AG04449 (cell line): ENCODE measurements at regions of chr6 and their contacts with region 1.

Region 1: DNA sequence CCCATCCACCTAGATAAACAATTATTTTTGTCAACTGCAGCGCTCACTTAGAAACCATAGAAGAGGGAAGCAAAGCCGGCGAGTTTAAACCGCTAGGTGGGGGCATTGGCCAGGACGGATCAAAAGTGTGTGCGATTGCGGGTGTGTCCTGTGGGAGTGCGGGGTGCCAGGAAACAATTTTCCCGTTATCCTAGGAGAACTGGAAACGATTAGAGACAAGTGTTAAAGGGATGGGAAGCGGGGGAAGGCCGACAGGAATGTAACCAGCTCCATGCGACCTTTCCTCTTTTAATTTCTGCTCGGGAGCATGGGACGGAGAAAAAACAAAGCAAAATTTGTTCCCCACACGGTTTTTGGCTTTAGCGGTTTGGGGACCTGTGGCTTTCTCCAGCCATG is 2.8 kb upstream of the HTR1B start:
- DNase-seq: no peak
- H3K4me3 ChIP-seq: peak overlapping the region; percentile 66
- CTCF ChIP-seq: peak; percentile 74

Region 2: DNA sequence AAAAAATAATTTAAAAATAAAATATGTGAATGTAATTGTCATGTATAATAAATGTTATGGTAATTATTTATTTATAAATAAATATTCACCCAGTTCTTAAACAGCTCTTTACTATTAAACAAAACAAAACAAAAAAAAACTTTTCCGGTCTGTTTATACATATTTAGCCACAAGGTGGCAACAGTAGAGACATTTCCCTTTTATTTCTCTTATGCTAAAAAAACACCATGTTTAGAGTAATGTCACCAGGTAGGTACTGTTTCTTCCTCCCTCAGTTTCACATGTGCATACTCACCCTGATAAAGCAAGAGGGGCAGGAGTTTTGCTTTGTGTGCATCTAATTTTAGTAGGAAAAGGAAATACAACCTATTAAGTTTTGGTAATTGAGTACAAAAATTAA is 783.2 kb before region 1 on chr6:
- CTCF ChIA-PET with region 1: interaction called, 27 read pairs
- POLR2A ChIA-PET with region 1: no interaction called
- DNase-seq: no peak
- H3K4me3 ChIP-seq: no peak overlapping the region
- CTCF ChIP-seq: no peak

Region 3: DNA sequence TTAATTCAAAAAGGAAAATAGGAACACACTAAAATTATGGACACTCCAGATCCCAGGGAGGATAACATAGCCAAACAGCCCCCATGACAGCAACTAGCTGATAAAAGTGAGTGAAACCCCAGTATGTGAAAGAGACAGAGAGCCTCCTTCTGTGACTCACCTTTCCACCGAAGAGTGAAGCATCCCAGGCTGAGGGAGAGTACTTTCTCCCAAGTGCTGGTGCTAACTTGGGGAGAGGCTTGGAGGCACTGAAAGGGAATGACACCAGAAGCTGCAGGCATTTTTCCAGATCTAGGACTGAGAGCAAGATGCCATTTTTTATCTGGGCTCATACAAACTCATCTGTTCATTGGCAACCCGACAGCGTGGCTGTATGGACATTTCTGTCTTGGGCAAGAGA is 342.5 kb before region 1 on chr6:
- CTCF ChIA-PET with region 1: no interaction called
- POLR2A ChIA-PET with region 1: no interaction called
- DNase-seq: no peak
- H3K4me3 ChIP-seq: no peak overlapping the region
- CTCF ChIP-seq: no peak

Region 4: GRCh38 chr6:77814119-77814518 is 348.1 kb after region 1 on chr6:
- CTCF ChIA-PET with region 1: no interaction called
- POLR2A ChIA-PET with region 1: no interaction called
- DNase-seq: no peak
- H3K4me3 ChIP-seq: no peak overlapping the region
- CTCF ChIP-seq: no peak

Region 5: GRCh38 chr6:77825204-77825603 is 359.2 kb after region 1 on chr6:
- CTCF ChIA-PET with region 1: no interaction called
- POLR2A ChIA-PET with region 1: no interaction called
- DNase-seq: no peak
- H3K4me3 ChIP-seq: no peak overlapping the region
- CTCF ChIP-seq: no peak

Region 6: DNA sequence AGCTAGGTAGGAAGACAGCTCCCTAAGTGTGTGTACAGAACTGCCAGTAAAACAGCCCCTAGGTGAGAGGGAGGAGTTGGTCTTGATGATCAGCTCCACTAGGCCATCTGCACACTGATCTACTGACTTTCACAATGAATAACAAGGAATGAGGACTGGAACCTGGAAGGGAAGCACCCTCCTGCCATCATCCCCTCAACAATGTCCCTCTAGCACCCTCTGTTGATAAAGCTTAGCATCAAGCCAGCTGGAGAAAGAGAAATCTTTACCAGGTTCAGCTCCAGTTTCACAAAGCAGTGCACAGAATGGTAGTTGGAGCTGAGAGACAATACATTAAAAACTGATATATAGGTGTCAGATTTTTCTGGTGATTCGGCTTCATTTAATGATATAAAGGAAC is 1344.1 kb after region 1 on chr6:
- CTCF ChIA-PET with region 1: interaction called, 45 read pairs
- POLR2A ChIA-PET with region 1: no interaction called
- DNase-seq: no peak
- H3K4me3 ChIP-seq: no peak overlapping the region
- CTCF ChIP-seq: peak; percentile 77